ENCODE measurements at regions of chr1 and their contacts with region 1.

Region 1: GRCh38 chr1:75265792-75266191 is 131.6 kb downstream of the LHX8 start:
- DNase-seq: no peak
- H3K4me3 Mint-ChIP-seq: no peak overlapping the region
- H3K27ac Mint-ChIP-seq: no peak overlapping the region
- H3K4me1 Mint-ChIP-seq: no peaks in the 10 kb centered on the region
- H3K27me3 Mint-ChIP-seq: no peaks in the 10 kb centered on the region

Region 2: GRCh38 chr1:75203415-75204277 is 62.1 kb before region 1 on chr1:
- CTCF ChIA-PET with region 1: no interaction called
- POLR2A ChIA-PET with region 1: no interaction called
- DNase-seq: no peak
- H3K4me3 Mint-ChIP-seq: no peak overlapping the region
- H3K27ac Mint-ChIP-seq: no peak overlapping the region
- H3K4me1 Mint-ChIP-seq: no peaks in the 10 kb centered on the region
- H3K27me3 Mint-ChIP-seq: no peaks in the 10 kb centered on the region

Region 3: GRCh38 chr1:75293270-75293669 is 27.5 kb after region 1 on chr1:
- CTCF ChIA-PET with region 1: no interaction called
- POLR2A ChIA-PET with region 1: no interaction called
- DNase-seq: no peak
- H3K4me3 Mint-ChIP-seq: no peak overlapping the region
- H3K27ac Mint-ChIP-seq: no peak overlapping the region
- H3K4me1 Mint-ChIP-seq: no peaks in the 10 kb centered on the region
- H3K27me3 Mint-ChIP-seq: no peaks in the 10 kb centered on the region

Region 4: DNA sequence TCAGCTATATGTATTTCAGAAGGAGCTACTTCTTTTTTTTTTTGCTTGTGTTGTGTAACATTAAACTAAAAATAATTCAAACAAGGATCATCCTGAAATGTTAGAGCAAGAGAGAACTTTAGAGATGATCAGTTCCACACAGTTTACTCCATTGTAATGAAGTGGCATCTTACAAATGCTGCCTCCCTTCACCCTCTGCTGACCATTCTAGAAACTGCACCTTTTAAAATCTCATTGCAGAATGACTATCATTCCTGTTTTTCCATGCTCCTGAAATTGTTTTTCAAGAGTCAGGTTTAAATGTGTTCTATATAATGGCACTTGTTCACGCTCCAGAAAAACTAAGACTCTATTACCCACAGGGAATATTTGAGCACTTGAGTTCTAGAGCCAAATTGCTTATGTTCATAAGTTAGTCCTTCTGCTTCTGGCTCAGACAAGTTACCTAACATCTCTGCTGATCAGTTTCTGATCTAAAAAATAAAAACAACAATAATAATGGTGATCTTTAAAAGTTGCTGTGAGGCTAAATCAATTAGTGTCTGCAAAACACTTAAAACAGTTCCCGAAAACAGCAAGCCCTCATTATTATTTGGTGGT is 366.7 kb after region 1 on chr1:
- CTCF ChIA-PET with region 1: interaction called, 12 read pairs
- POLR2A ChIA-PET with region 1: no interaction called
- DNase-seq: no peak
- H3K4me3 Mint-ChIP-seq: no peak overlapping the region
- H3K27ac Mint-ChIP-seq: no peak overlapping the region
- H3K4me1 Mint-ChIP-seq: no peaks in the 10 kb centered on the region
- H3K27me3 Mint-ChIP-seq: peaks cover 5% of the 10 kb centered on the region